Transverse colon (tissue), 4 donors: ENCODE measurements at regions of chr11 and their contacts with region 1.

Region 1: DNA sequence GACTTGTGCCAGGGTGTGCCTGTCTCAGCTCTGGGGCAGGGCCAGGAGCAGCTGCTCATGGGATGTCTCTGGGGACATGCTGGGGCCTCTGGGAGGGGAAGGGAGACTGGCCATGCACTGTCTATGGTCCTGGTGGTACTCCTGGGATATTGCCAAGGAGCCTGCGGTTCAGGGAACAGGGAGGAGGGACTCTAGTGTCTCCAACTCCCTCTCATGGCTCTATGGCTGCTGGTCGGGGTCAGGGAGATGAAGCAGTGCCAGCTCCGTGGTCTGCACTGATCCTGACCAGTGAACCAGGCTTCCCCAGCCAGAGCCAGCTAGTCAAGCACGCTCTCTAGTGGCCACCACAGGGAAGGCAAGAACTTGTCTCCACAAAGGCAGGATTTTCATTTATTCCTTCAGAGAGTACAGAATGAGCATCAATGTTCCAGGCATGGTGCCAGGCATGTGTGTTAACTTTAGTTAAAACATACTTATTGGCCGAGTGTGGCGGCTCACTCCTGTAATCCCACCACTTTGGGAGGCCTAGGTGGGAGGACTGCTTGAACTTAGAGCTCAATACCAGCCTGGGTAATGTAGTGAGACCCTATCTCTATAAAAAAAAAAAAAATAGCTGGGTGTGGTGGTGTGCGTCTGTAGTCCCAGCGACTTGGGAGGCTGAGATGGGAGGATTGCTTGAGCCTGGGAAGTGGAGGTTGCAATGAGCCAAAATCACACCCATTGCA is 2.5 kb upstream of the BEST1 start:
- DNase-seq: peak; percentile 88
- H3K4me3 ChIP-seq: no peak overlapping the region
- H3K27ac ChIP-seq: no peak overlapping the region
- H3K4me1 ChIP-seq: peaks cover 7 to 14% (median 10%) of the 10 kb centered on the region in 4 donors
- H3K27me3 ChIP-seq: no peaks in the 10 kb centered on the region
- CTCF ChIP-seq: peak; percentile 86 to 92 (median 90)
- EP300 ChIP-seq: no peak
- POLR2A ChIP-seq: no peak

Region 2: GRCh38 chr11:61792310-61793085 is 155.2 kb before region 1 on chr11 and contains the starts of genes FEN1 and TMEM258:
- in situ Hi-C with region 1: loop called in 1 of 4 experiments (anchors 10 kb)
- intact Hi-C with region 1: no loop called
- DNase-seq: peak; percentile 88
- H3K4me3 ChIP-seq: peak within 1 kb of the TSS; percentile 75 to 81 (median 80)
- H3K27ac ChIP-seq: peak within 1 kb of the TSS; percentile 90 to 98 (median 94)
- H3K4me1 ChIP-seq: peaks cover 5 to 23% (median 22%) of the 10 kb centered on the region in 4 donors
- H3K27me3 ChIP-seq: no peaks in the 10 kb centered on the region
- CTCF ChIP-seq: peak in 3 of 5 experiments; percentile 8 to 44 (median 10)
- EP300 ChIP-seq: no peak
- POLR2A ChIP-seq: peak; percentile 69
- total RNA-seq, gene FEN1: 1.00 to 9.4 (median 4.5) TPM
- total RNA-seq, gene TMEM258: 8.2 to 34.7 (median 23.7) TPM

Region 3: GRCh38 chr11:61899146-61899841 is 48.4 kb before region 1 on chr11:
- in situ Hi-C with region 1: loop called in 3 of 4 experiments (anchors 5 to 10 kb)
- intact Hi-C with region 1: loop called (anchors 2 kb)
- DNase-seq: peak; percentile 89
- H3K4me3 ChIP-seq: no peak overlapping the region
- H3K27ac ChIP-seq: no peak overlapping the region
- H3K4me1 ChIP-seq: peaks cover 0 to 2% (median 0%) of the 10 kb centered on the region in 4 donors
- H3K27me3 ChIP-seq: no peaks in the 10 kb centered on the region
- CTCF ChIP-seq: peak; percentile 99 to 100 (median 99)
- EP300 ChIP-seq: no peak
- POLR2A ChIP-seq: no peak

Region 4: DNA sequence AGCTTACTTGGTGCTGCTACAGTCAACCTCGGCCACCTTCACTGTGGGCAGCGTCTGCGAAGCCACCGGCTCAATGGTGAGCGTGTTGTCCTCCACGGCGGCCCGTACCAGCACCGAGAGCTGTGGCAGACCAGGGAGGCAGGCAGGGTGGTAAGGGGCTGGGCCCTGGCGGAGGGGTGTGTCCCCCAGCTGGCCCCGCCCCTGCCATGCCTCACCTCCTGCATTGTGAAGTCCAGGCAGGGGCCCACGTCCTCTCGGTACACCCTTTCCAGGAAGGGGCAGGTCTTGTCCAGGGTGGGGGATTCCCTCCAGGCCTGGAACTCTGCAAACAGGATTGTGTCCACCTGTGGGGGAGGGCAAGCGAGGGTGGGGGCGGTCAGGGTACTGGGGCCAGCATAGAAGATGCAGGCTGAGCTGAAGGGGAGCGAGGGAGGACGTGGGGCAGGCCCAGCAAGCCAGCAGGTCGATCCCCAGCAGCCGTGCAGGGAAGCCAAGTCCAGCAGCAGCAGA is 43.1 kb before region 1 on chr11:
- in situ Hi-C with region 1: loop called in 3 of 4 experiments (anchors 5 to 10 kb)
- intact Hi-C with region 1: loop called (anchors 2 kb)
- DNase-seq: no peak
- H3K4me3 ChIP-seq: no peak overlapping the region
- H3K27ac ChIP-seq: no peak overlapping the region
- H3K4me1 ChIP-seq: no peaks in the 10 kb centered on the region
- H3K27me3 ChIP-seq: no peaks in the 10 kb centered on the region
- CTCF ChIP-seq: no peak
- EP300 ChIP-seq: no peak
- POLR2A ChIP-seq: no peak

Region 5: GRCh38 chr11:62081378-62082291 is 134.0 kb after region 1 on chr11:
- in situ Hi-C with region 1: no loop called
- intact Hi-C with region 1: loop called (anchors 10 kb)
- DNase-seq: peak; percentile 86
- H3K4me3 ChIP-seq: no peak overlapping the region
- H3K27ac ChIP-seq: no peak overlapping the region
- H3K4me1 ChIP-seq: peaks cover 0 to 7% (median 5%) of the 10 kb centered on the region in 4 donors
- H3K27me3 ChIP-seq: no peaks in the 10 kb centered on the region
- CTCF ChIP-seq: peak; percentile 89 to 90 (median 90)
- EP300 ChIP-seq: no peak
- POLR2A ChIP-seq: no peak